ENCODE measurements at regions of chr14 and their contacts with region 1.

Region 1: DNA sequence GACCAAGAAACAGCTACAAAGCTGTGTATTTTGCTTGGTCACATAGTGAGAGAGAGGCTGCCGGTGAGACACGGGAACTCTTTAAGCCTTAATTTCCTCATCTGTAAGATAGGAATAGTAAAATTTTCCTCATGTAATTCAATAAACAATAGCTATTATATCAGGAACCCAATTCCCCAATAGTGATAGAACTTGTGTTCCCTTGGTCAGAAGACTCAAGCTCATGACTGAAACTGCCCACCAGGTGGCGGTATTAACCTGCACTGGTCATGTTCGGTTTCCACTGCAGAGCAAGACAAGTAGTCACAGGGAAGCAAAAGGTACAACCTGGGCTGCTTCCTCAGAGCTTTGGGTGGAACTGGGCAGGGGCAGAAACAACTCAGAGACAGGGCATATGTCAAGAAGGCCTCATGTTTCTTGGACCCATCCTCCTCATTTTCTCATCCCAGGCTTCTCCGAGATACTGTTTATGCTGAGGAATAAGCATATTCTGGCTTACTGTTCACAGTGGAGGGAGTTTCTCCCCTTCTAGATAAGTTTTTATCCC is 4.2 kb upstream of the AJUBA start:
- DNase-seq: peak in 1 of 2 experiments; percentile 95
- H3K4me3 ChIP-seq: no peak overlapping the region
- H3K27ac ChIP-seq: no peak overlapping the region
- H3K4me1 ChIP-seq: no peaks in the 10 kb centered on the region
- H3K27me3 ChIP-seq: peaks cover 0 to 2% (median under 1%) of the 10 kb centered on the region in 4 experiments; a peak in 1 of 7 replicates
- CTCF ChIP-seq: peak; percentile 74 to 96 (median 90)
- EP300 ChIP-seq: no peak
- POLR2A ChIP-seq: no peak
- RAD21 ChIP-seq: peak; percentile 94 to 96

Region 2: DNA sequence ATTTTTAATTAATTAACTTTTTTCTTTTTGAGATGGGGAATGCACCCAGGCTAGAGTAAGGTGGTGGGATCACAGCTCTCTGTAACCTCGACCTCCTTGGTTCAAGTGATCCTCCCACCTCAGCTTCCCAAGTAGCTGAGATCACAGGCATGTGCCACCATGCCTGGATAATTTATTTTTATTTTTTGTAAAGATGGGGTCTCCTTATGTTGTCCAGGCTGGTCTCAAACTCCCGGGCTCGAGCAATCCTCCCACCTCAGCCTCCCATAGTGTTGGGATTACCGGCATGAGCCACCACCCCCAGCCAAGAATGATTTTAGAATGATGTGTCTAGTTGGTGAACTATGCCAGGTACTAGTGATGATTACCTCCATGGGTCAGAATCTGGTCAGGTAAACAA is 121.6 kb before region 1 on chr14:
- CTCF ChIA-PET with region 1: no interaction called
- POLR2A ChIA-PET with region 1: no interaction called
- DNase-seq: no peak
- H3K4me3 ChIP-seq: no peak overlapping the region
- H3K27ac ChIP-seq: no peak overlapping the region
- H3K4me1 ChIP-seq: peaks cover 0 to 6% (median 0%) of the 10 kb centered on the region in 4 experiments; a peak in 1 of 7 replicates
- H3K27me3 ChIP-seq: no peaks in the 10 kb centered on the region
- CTCF ChIP-seq: no peak
- EP300 ChIP-seq: no peak
- POLR2A ChIP-seq: no peak
- RAD21 ChIP-seq: no peak

Region 3: DNA sequence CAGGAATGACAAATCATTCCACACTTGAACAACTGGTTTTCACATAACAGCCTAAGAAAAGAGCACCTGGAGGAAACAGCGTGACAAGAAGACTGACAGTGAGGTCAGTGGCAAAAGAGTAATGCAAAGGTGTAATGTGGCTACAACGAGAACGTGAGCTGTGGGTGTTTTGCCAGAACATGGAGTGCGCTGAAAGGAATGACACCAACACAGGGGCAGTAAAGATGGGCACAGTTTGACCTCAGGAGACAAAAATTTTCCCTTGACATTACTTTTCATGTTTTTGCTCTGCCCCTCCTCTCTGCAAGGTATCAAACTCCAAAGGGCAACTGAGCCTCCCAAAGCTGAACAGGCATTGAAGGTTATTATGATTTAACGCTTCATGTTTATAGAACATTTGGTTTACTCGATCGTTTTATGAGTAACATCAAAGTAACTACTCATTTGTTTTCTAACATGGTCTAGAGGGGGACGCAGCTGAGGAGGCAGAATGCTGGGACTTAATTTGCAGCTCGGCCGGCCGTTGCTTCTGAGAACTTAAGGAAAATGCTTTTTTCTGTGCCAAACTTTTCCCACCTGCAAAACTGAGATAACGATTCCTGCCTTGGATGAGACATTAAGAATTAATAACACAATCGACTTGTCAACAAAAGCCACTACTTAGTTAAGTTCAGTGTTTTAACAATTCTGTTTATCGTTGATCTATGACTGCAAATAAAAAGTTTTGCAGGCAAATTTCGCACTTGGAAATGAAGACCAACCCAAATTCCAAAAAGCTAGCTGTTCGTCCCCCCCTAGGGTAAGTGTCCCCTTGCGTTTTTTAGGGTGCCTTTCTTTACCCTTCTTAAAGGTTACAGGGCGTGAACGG is 30.6 kb before region 1 on chr14:
- CTCF ChIA-PET with region 1: interaction called, 14 read pairs
- POLR2A ChIA-PET with region 1: interaction called, 45 read pairs
- DNase-seq: no peak
- H3K4me3 ChIP-seq: peak overlapping the region; percentile 71 to 88 (median 84)
- H3K27ac ChIP-seq: 0 out of 2 replicates have a peak overlapping the region, but pooled peaks have one; percentile 89
- H3K4me1 ChIP-seq: peaks cover 2 to 4% (median 2%) of the 10 kb centered on the region in 4 experiments; a peak in 5 of 7 replicates
- H3K27me3 ChIP-seq: no peaks in the 10 kb centered on the region
- CTCF ChIP-seq: no peak
- EP300 ChIP-seq: no peak
- POLR2A ChIP-seq: no peak
- RAD21 ChIP-seq: no peak

Region 4: DNA sequence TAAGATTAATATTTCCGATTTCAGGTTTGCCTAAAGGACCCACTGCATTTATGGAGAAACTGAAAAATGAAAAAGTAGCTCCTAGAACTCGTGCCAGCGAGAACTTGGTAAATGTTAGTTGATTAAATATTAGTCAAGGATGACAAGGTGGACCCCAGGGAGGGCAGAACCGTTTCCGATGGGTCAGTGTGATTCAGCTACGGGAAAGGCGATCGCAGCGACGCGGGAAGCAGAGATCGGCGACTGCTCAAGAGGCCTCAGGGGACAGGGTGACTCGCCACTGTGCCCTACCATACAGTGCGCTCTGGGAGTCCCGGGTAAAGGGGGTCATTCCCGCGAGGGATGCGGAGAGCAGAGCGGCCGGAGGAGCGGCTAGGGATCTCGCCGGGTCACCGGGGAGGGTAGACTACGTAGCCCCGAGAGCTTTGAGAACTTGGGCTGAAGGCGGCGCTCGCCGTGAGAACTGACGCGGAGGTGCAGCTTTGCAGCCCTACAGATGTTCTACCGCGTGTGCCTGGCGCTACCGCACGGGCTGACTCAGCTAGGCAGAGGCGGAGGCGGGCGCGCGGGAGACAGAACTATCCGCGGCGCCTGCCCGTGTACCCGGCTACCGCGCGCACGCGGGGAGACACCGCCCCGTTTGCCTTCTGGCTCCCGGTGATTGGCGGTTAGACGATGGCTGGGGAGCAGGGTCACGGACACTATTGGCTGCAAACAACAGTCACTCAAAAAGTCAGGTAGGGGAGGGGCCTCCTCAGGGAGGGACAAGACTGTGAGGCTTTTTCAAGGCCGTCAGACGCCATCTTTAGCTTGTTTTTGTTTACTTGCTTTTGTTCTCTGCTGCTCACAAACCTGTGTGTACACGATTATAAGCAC is 20.2 kb after region 1 on chr14:
- CTCF ChIA-PET with region 1: interaction called, 54 read pairs
- POLR2A ChIA-PET with region 1: interaction called, 133 read pairs
- DNase-seq: peak; percentile 89 to 92
- H3K4me3 ChIP-seq: peak overlapping the region; percentile 73 to 85 (median 76)
- H3K27ac ChIP-seq: peak overlapping the region; percentile 89
- H3K4me1 ChIP-seq: peaks cover 4 to 7% (median 6%) of the 10 kb centered on the region in 4 experiments; a peak in 4 of 7 replicates
- H3K27me3 ChIP-seq: no peaks in the 10 kb centered on the region
- CTCF ChIP-seq: peak in 1 of 3 experiments; percentile 27; a peak in 2 of 4 replicates
- EP300 ChIP-seq: no peak
- POLR2A ChIP-seq: peak; percentile 74 to 99
- RAD21 ChIP-seq: no peak

Region 5: DNA sequence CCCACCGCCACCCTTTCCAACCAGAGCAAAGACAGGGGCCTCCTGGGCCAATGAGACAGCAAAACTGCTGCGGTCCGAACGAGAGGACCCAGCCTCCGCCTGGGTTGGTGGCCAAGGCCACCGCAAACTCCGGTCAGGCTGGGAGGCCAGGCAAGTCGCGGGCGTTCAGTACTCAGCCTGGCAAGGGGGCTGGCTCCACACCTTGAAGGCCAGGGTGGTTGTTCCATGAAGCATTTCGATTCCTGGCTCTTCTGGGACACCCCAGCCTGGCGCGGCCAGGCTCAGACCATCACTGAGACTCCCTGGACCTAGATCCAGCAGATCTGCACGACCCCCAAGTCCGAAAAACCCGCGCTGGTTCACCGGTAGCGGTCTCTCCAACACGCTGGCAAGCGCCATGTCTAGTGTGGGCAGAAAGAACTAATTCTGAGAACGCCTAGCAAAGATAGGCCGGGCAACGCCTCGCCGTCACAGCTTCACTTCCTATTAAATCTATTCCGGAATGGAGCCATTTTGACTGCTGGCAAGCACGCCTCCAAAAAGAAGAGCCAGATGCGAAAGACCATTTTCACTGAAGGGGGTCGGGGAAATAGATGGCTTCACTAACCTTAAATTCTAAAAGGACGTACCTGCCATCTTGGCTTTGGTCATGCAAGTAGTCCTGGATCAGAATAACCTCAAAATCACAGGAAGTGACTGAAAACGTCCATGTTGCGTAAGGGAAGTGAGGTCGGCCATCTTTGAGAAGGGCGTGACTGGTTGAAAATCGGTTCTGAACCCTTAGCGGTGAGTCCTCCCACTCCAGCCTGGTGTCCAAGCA is 48.1 kb after region 1 on chr14 and contains the start of gene PSMB5:
- CTCF ChIA-PET with region 1: interaction called, 785 read pairs
- POLR2A ChIA-PET with region 1: interaction called, 12 read pairs
- DNase-seq: peak; percentile 80 to 89
- H3K4me3 ChIP-seq: peak within 1 kb of the TSS; percentile 79 to 95 (median 88)
- H3K27ac ChIP-seq: peak within 1 kb of the TSS; percentile 98
- H3K4me1 ChIP-seq: peaks cover 0 to 3% (median 1%) of the 10 kb centered on the region in 4 experiments; a peak in 2 of 7 replicates
- H3K27me3 ChIP-seq: no peaks in the 10 kb centered on the region
- CTCF ChIP-seq: no peak
- EP300 ChIP-seq: no peak
- POLR2A ChIP-seq: peak; percentile 75 to 89
- RAD21 ChIP-seq: no peak
- total RNA-seq, gene PSMB5: 246 and 254 TPM in 2 replicates